HEK293 (cell line): ENCODE measurements at regions of chr9 and their contacts with region 1.

Region 1: GRCh38 chr9:21812946-21813568 is 10.6 kb downstream of the MTAP start:
- H3K4me3 ChIP-seq: no peak overlapping the region
- H3K27ac ChIP-seq: no peak overlapping the region; the same call in 1 of the 2 replicates
- H3K4me1 ChIP-seq: no peaks in the 10 kb centered on the region
- CTCF ChIP-seq: peak; percentile 71; the same call in 1 of the 2 replicates

Region 2: DNA sequence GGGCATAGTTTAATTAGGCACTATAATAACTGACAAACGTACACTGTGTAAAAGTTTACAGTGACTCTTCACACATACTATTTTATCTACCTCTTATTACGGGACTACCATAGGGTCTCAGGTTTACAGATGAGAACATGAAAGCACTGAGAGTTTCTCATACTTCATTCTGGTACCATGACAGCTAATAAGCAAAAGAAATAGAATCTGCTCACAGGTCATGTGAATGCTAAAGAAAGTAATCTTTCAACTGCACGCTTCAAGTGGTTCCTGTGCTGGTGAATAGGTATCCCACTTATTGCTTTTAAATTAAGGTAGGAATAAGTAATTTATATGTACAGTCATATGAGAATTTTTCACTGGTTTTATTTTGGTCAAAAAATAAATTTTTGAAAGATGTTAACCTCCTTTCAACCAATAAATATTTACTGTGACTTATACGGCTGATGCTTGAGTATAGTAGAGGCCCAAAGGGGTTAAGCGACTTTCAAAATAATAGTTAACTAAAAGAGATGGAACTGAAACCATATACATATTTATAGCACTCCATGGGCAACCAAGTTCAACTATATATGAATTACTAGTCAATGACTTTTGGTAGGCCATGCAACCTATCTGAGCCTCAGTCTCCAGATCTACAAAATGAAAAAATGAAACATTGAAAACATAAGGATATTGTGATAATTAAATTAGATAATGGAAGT is 173.1 kb after region 1 on chr9:
- CTCF ChIA-PET with region 1: interaction called, 30 read pairs
- POLR2A ChIA-PET with region 1: no interaction called
- H3K4me3 ChIP-seq: no peak overlapping the region; the same call in 1 of the 2 replicates
- H3K27ac ChIP-seq: no peak overlapping the region
- H3K4me1 ChIP-seq: peaks cover 38% of the 10 kb centered on the region
- CTCF ChIP-seq: no peak

Region 3: GRCh38 chr9:22037954-22038690 is 225.1 kb after region 1 on chr9:
- CTCF ChIA-PET with region 1: interaction called, 41 read pairs
- POLR2A ChIA-PET with region 1: no interaction called
- H3K4me3 ChIP-seq: no peak overlapping the region
- H3K27ac ChIP-seq: no peak overlapping the region
- H3K4me1 ChIP-seq: peaks cover 10% of the 10 kb centered on the region; the same call in 1 of the 2 replicates
- CTCF ChIP-seq: no peak

Region 4: DNA sequence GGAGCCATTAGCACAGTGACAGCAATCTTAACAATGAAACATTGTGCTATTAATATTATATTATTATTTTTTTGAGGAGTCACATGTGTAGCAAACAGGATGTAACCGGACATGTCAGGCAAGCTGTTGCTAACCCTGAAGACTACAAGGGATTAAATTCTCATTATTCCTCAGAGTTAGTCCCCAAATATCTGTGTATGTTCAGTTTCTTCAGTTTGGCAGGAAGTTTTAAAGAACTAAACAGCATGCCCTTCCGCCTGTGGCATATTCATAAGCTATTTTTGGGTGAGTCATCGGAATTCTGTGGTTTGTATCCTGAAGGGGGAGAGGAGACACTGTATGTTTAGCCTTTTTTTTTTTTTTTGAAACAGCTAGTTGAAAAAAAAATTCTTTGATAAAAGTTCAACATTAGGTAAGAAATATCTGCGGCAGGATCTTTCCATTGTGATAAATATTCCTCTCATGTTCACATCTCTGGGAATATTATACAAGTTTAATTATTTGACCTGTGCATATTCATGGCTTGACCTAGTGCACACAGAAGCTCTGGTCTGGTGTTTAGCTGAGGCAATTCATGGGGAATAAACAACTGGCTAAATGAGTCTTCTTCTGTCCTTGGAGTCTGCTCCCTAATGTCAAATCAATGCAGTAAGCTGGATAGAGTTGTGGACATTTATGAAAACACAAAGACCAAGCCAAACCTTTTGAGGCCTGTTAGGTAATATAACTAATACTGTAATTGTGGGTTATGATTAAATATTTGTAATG is 398.7 kb after region 1 on chr9:
- CTCF ChIA-PET with region 1: interaction called, 10 read pairs
- POLR2A ChIA-PET with region 1: no interaction called
- H3K4me3 ChIP-seq: no peak overlapping the region
- H3K27ac ChIP-seq: 0 out of 2 replicates have a peak overlapping the region, but pooled peaks have one; percentile 30
- H3K4me1 ChIP-seq: peaks cover 30% of the 10 kb centered on the region
- CTCF ChIP-seq: no peak

Region 5: DNA sequence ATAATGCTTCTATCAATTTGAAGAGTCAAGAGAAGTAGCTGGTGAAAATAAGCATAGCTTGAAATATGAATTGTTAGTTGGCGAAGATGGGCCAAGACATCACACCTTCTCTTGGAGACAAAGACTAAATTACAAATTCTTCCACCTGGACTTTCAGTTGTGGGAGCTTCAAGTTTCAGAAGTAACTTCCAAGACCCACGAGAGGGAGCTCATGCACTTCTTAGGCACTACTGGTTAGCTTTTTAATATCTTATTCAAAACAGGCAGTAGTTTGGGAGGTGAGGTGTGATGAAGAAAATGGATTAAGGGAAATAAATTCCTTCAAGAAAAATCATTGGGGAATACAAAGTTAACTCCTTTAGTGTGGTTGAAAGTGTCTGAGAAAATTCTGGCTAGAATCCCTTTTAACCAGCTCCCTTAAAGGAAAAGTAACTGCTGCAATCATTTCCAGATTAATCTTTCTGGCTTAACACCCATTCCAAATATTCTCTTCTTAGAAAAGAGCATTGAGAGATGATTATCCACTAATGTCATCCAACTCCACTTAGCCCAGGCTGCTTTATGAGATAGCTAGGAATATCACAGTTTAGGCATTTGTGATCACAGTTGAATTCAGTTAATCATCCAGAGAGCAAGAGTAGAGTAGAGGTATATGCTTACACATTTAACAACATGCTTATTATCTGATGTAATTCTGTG is 494.1 kb after region 1 on chr9:
- CTCF ChIA-PET with region 1: interaction called, 12 read pairs
- POLR2A ChIA-PET with region 1: no interaction called
- H3K4me3 ChIP-seq: no peak overlapping the region
- H3K27ac ChIP-seq: no peak overlapping the region
- H3K4me1 ChIP-seq: no peaks in the 10 kb centered on the region
- CTCF ChIP-seq: peak; percentile 42; the same call in 1 of the 2 replicates